ENCODE measurements at regions of chr14 and their contacts with region 1.

Region 1: DNA sequence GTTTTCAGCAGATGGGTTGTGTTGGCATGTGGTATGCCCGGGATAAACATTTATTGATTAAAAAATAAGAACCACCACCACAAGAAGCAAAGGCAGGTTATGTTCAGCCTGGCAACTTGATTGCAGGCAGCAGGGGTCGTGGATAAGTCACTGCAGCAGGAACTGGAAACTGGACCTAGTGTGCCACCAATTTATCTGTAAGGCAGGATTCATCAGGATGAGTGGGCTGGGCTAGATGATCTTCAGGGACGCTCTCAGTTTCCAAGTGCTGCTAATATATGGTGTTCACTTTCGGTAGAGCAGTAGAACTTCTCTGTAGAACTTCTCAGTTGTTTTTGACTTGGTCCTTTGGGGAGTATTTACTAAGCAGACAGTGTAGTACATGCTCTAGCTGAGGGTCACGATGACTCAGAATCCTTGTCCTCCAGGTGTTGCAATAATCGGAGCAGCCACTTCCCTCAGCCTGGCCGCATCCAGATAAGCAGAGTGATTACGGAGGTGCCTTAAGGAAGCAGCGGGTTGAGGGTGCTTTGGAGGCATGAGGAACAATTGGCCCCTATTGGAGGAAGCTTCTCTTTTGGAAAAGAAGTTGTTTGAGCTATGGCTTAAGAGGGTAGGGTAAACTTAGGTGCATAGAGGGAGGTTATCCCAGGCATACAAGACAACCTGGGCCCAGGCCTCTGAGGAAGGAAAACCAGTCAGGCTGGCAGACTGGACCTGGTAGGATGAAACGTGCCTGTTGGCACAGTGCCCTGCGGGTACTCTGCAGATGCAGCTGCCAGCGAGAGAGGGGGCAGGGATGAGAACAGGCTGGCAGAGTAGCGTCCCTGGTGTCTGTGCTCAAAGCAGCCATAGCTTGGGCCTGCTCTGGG is 104.0 kb downstream of the GPR135 start:
- DNase-seq: peak; percentile 47
- H3K4me3 ChIP-seq: peak overlapping the region; percentile 62
- H3K27ac ChIP-seq: peak overlapping the region; percentile 99
- H3K4me1 ChIP-seq: peaks cover 84% of the 10 kb centered on the region
- CTCF ChIP-seq: no peak; the same call in 1 of the 2 replicates

Region 2: GRCh38 chr14:59126710-59127432 is 234.3 kb before region 1 on chr14:
- CTCF ChIA-PET with region 1: no interaction called
- POLR2A ChIA-PET with region 1: interaction called, 5 read pairs
- intact Hi-C with region 1: loop called (anchors 5 kb)
- DNase-seq: peak; percentile 83
- H3K4me3 ChIP-seq: no peak overlapping the region
- H3K27ac ChIP-seq: no peak overlapping the region
- H3K4me1 ChIP-seq: peaks cover 21% of the 10 kb centered on the region
- CTCF ChIP-seq: peak; percentile 98

Region 3: GRCh38 chr14:59189786-59190771 is 171.1 kb before region 1 on chr14:
- CTCF ChIA-PET with region 1: no interaction called
- POLR2A ChIA-PET with region 1: interaction called, 4 read pairs
- intact Hi-C with region 1: loop called (anchors 2 kb)
- DNase-seq: peak; percentile 83
- H3K4me3 ChIP-seq: peak overlapping the region; percentile 85
- H3K27ac ChIP-seq: peak overlapping the region; percentile 73
- H3K4me1 ChIP-seq: peaks cover 61% of the 10 kb centered on the region
- CTCF ChIP-seq: peak; percentile 74

Region 4: DNA sequence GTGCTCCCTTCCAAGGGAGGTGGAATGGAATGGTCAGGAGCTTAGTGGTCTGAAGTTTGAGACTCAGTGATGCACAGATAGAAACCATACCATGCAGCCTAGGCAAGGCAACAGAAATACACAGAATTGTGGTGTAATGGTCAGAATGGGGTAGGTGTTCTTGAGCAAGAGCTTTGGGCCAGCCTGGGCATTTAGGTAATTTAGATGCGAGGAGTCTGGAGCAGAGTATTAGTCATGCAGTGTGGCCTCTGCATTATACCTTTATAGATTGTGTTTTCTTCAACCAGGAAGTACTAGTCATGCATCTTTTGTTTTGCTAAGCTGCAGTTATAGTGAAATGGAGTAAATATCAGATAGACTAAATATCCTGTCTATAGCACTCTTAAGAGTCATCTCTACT is 54.4 kb before region 1 on chr14:
- CTCF ChIA-PET with region 1: interaction called, 3 read pairs
- POLR2A ChIA-PET with region 1: interaction called, 23 read pairs
- intact Hi-C with region 1: loop called (anchors 1 kb)
- DNase-seq: no peak
- H3K4me3 ChIP-seq: no peak overlapping the region
- H3K27ac ChIP-seq: no peak overlapping the region
- H3K4me1 ChIP-seq: peaks cover 87% of the 10 kb centered on the region
- CTCF ChIP-seq: no peak

Region 5: DNA sequence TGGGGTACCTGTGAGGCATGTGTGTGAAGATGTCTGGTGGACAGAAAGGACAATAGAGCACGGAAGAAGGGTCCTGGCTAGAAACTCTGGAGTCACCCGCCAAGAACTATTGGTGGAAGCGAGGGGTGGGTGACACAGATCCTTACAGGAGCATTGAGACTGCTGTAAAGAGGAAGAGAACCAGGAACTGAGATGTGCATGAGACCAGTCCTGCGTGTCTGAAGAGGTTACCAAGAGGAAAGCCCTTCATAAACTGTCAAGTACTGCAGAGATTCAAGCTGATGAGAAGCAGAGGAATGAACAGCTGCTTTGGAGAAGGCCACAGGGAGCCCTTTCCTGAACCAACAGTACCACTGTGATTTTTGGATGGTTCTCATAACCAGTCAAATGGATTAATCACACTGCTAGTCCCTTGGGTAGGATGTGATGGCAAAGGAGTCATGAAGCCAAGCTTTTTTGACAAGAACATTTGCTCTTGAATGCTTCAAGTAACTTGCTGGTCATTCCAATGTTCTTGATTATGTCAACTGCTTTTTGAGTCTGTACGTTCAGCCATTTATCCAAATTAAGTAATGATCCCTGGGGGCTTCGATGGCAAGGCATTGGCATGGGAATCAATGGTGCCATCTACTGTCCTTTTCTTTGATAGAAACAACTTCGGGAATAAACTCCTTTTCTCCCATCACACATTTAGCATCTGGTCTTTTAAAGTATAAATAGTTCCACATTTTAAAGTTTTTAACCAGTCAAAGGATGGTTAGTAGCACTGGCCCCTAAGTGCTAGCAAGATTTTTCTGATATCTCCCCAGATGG is 61.1 kb after region 1 on chr14:
- CTCF ChIA-PET with region 1: no interaction called
- POLR2A ChIA-PET with region 1: no interaction called
- intact Hi-C with region 1: loop called (anchors 2 kb)
- DNase-seq: peak; percentile 64
- H3K4me3 ChIP-seq: no peak overlapping the region
- H3K27ac ChIP-seq: peak overlapping the region; percentile 16
- H3K4me1 ChIP-seq: peaks cover 26% of the 10 kb centered on the region
- CTCF ChIP-seq: peak; percentile 79

Region 6: GRCh38 chr14:59454131-59454530 is 93.0 kb after region 1 on chr14:
- CTCF ChIA-PET with region 1: no interaction called
- POLR2A ChIA-PET with region 1: no interaction called
- intact Hi-C with region 1: no loop called
- DNase-seq: no peak
- H3K4me3 ChIP-seq: no peak overlapping the region
- H3K27ac ChIP-seq: no peak overlapping the region
- H3K4me1 ChIP-seq: no peaks in the 10 kb centered on the region
- CTCF ChIP-seq: no peak

Region 7: GRCh38 chr14:59483900-59484638 is 122.9 kb after region 1 on chr14 and contains the starts of genes JKAMP and L3HYPDH:
- CTCF ChIA-PET with region 1: no interaction called
- POLR2A ChIA-PET with region 1: no interaction called
- intact Hi-C with region 1: loop called (anchors 5 kb)
- DNase-seq: peak; percentile 98
- H3K4me3 ChIP-seq: peak within 1 kb of the TSS; percentile 87
- H3K27ac ChIP-seq: peak within 1 kb of the TSS; percentile 58
- H3K4me1 ChIP-seq: peaks cover 38% of the 10 kb centered on the region
- CTCF ChIP-seq: peak; percentile 69
- total RNA-seq, gene JKAMP: 19.7 and 24.9 TPM in 2 replicates
- total RNA-seq, gene L3HYPDH: 43.2 and 43.5 TPM in 2 replicates

Region 8: GRCh38 chr14:59679872-59680271 is 318.7 kb after region 1 on chr14:
- CTCF ChIA-PET with region 1: no interaction called
- POLR2A ChIA-PET with region 1: no interaction called
- intact Hi-C with region 1: no loop called
- DNase-seq: no peak
- H3K4me3 ChIP-seq: no peak overlapping the region
- H3K27ac ChIP-seq: no peak overlapping the region
- H3K4me1 ChIP-seq: no peaks in the 10 kb centered on the region
- CTCF ChIP-seq: no peak

Measured in OCI-LY7 (cell line).